PC-9 (cell line): ENCODE measurements at regions of chr21 and their contacts with region 1.

Region 1: DNA sequence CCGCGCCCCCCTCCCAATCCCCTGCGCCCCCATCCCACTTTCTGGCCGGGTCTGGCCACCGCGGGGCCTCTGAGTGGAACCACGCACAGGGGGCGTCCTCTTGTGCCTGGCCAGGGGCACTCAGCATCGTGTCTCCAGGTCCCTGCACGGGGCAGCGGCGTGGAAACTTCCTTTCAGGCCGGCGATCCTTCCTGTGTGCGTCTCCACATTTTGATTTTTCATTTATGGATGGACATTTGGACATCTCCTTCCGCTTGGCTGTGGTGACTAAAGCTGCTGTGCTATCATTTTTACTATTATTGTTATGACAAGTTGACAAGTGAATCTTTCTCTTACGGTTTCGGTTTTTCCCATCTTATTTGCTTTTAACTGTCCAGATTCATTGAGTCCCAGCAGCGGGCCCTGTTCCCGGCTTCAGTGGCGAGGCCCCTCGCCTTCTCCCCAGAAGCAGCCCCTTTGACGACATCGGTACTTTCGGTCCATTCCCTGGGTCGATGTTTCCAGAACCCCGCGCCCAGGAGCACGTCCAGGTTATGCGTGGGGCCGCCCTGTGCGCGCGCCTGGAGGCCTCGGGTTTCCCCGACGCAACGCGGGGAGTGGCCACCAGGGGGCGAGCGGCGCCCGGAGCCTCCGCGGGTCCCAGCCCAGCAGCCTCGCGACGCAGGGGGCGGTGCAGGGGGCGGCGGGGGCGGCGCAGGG is 12.4 kb upstream of the SLC19A1 start:
- DNase-seq: peak in 1 of 2 experiments; percentile 76
- H3K4me3 ChIP-seq: peak overlapping the region; percentile 58; the same call in 1 of the 2 replicates
- H3K27ac ChIP-seq: no peak overlapping the region
- H3K4me1 ChIP-seq: peaks cover 11% of the 10 kb centered on the region
- H3K27me3 ChIP-seq: peaks cover 16% of the 10 kb centered on the region; the same call in 1 of the 2 replicates
- CTCF ChIP-seq: peak; percentile 67

Region 2: GRCh38 chr21:45439161-45439872 is 115.3 kb before region 1 on chr21:
- CTCF ChIA-PET with region 1: no interaction called
- POLR2A ChIA-PET with region 1: no interaction called
- intact Hi-C with region 1: no loop called
- DNase-seq: peak in 1 of 2 experiments; percentile 67
- H3K4me3 ChIP-seq: no peak overlapping the region
- H3K27ac ChIP-seq: no peak overlapping the region
- H3K4me1 ChIP-seq: no peaks in the 10 kb centered on the region
- H3K27me3 ChIP-seq: no peaks in the 10 kb centered on the region
- CTCF ChIP-seq: peak; percentile 89

Region 3: GRCh38 chr21:45513008-45513702 is 41.5 kb before region 1 on chr21:
- CTCF ChIA-PET with region 1: no interaction called
- POLR2A ChIA-PET with region 1: no interaction called
- intact Hi-C with region 1: loop called (anchors 5 kb)
- DNase-seq: peak; percentile 86 to 92
- H3K4me3 ChIP-seq: no peak overlapping the region
- H3K27ac ChIP-seq: peak overlapping the region; percentile 43
- H3K4me1 ChIP-seq: peaks cover 55% of the 10 kb centered on the region
- H3K27me3 ChIP-seq: no peaks in the 10 kb centered on the region
- CTCF ChIP-seq: no peak

Region 4: DNA sequence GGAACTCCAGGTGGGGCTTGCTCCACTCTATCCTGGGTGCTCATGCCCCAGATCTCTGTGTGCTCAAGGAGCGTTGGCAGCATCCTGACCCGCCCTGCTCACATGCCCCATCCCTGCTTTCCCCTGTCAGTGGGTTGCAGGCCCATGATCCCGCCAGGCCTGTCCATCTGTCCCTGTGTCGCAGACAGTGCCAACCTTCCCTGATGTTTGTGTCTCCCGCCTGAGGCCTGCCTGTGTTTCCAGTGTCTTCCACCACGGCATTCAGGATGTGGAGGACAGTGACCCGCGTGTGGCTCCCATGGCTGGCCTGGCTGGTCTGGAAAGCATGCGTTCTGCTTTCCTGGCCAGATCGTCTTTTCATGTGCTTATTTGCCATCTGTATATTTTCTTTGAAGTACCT is 171.8 kb after region 1 on chr21:
- CTCF ChIA-PET with region 1: no interaction called
- POLR2A ChIA-PET with region 1: no interaction called
- intact Hi-C with region 1: no loop called
- DNase-seq: no peak
- H3K4me3 ChIP-seq: no peak overlapping the region
- H3K27ac ChIP-seq: no peak overlapping the region
- H3K4me1 ChIP-seq: no peaks in the 10 kb centered on the region
- H3K27me3 ChIP-seq: peaks cover 74% of the 10 kb centered on the region
- CTCF ChIP-seq: no peak

Region 5: DNA sequence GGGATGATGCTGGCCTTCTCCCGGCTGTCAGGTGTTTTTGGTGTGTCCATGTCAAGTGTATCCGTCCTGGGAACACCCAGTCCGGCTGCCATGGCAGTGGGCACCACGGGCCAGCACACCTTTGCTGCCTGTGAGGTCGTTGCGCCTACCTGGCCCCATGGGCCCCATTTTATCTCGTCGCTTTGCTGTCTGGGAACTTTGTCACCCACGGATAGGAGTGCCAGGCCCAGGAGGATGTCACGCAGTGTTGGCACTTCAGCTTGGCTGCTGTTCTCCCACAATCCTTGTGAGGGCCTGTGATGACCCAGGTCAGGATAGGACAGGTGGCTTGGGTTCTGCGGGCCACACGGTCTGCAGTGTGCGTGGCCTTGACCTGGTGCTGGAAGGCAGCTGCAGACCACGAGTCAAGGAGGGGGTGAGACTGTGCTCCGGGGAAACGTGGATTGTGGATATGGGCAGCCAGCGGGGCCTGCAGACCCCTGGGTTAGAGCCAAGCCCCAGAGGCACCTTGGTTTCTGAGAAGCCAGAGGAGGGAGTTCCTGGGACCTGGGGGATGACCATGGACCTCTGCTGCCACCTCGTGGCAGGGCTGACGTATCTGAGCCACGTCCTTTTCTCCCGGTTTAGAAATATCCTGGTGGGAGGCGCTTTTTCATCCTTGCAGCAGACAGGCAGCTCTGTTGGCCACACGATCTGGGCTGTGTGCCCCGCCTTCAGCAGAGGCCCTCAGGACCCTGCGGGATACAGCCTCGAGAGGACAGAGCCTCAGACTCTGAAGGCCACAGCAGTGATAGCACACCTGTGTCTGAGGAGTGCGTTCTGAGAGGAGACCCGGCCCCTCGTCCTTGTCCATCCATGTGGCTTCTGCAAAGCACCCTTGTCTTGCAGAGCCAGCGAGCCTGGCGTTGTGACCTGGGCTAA is 265.8 kb after region 1 on chr21:
- CTCF ChIA-PET with region 1: no interaction called
- POLR2A ChIA-PET with region 1: no interaction called
- intact Hi-C with region 1: loop called (anchors 2 kb)
- DNase-seq: peak; percentile 58 to 68
- H3K4me3 ChIP-seq: no peak overlapping the region
- H3K27ac ChIP-seq: no peak overlapping the region
- H3K4me1 ChIP-seq: peaks cover 16% of the 10 kb centered on the region; the same call in 1 of the 2 replicates
- H3K27me3 ChIP-seq: peaks cover 21% of the 10 kb centered on the region
- CTCF ChIP-seq: peak; percentile 81